Activated naive CD4-positive, alpha-beta T cell treated with anti-CD3 and anti-CD28 coated beads for 36 hours (primary cell): ENCODE measurements at regions of chr2 and their contacts with region 1.

Region 1: DNA sequence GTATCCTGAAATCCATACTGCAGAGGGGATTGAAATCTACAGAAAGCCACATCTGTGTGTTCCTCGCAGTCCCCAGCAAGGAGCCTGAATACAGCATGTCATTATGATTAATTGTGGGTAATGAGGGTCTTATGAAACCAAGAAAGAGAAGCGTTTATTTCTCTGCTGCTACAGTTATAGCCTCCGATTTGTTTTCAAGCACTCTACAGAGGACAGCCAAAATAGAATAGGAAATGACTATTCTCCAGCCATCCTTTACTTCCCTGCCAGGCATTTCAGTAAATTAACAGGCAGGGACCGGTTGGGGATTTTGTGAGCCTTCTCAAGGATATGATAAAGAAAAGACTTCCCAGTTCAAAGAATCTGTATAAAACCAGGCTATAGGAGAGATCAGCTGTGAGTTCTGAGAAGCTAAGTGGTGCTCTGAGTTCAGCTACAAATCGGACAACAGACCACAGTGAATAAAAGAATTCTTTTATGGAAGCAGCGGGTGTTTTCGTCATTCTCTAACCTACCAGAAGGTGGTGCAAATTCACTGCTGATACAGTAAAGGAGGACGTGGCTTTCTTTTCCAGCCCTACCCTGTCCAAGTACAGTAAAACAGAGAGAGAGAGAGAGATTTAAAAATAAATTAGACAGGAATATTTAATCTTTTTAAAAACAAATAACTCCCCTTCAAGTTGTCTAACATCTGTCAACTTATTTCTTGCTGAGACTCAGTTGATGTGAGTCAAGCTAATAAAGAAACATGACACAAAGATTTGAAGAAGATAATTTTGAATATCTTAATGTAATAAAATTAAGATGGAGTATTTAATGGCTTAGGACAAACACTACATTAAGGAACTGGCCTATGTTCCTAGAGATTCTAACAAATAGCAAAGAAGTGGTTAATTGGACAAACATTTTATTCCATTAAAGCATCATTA is 133.7 kb downstream of the INSIG2 start:
- DNase-seq: peak; percentile 56
- H3K4me3 Mint-ChIP-seq: no peak overlapping the region
- H3K27ac Mint-ChIP-seq: no peak overlapping the region
- H3K4me1 Mint-ChIP-seq: peaks cover 12% of the 10 kb centered on the region
- H3K27me3 Mint-ChIP-seq: peaks cover 57% of the 10 kb centered on the region

Region 2: DNA sequence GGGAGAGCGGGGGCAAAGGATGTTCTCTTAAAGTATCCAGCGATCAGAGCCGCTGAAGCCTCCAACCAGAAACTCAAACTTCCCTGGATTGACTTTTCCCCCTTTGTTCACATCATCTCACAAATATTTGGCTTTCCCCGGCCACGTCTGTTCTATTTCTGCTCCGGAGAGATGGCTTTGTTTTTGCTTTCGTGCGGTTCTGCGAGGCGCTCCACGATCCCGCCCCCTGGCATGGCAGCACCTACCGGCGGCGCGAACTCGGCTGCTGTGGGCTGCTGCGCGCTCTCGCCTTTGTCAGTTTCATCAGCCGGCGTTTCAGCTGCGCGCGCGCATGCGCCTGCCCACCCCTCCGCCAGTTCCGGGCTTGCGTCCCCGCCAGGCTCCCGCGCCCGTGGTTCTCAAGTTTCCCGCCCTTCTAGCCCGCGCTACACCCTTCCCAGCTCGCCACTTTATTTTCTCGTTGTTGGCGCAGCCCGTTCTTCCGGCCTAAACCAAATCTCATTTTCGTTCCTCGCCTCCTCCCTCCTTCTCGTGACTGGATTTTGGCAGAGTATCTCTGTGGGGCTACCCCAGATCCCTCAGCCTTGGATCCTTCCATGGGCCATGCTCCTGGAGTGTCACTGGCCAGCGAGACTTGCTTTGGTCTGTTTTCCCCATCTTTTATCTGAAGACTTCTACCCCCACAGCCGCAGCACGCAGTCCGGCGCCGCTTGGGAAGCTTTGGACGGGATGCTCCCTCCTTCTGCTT is 35.6 kb before region 1 on chr2:
- CTCF ChIA-PET with region 1: no interaction called
- intact Hi-C with region 1: loop called (anchors 1 kb)
- DNase-seq: peak; percentile 90
- H3K4me3 Mint-ChIP-seq: peak overlapping the region; percentile 92
- H3K27ac Mint-ChIP-seq: peak overlapping the region; percentile 97
- H3K4me1 Mint-ChIP-seq: peaks cover 14% of the 10 kb centered on the region
- H3K27me3 Mint-ChIP-seq: no peaks in the 10 kb centered on the region

Region 3: GRCh38 chr2:118309946-118310680 is 88.2 kb after region 1 on chr2:
- CTCF ChIA-PET with region 1: no interaction called
- intact Hi-C with region 1: loop called (anchors 1 kb)
- DNase-seq: peak; percentile 69
- H3K4me3 Mint-ChIP-seq: peak overlapping the region; percentile 79
- H3K27ac Mint-ChIP-seq: peak overlapping the region; percentile 90
- H3K4me1 Mint-ChIP-seq: peaks cover 2% of the 10 kb centered on the region
- H3K27me3 Mint-ChIP-seq: no peaks in the 10 kb centered on the region

Region 4: GRCh38 chr2:118371515-118371914 is 149.6 kb after region 1 on chr2:
- CTCF ChIA-PET with region 1: no interaction called
- intact Hi-C with region 1: loop called (anchors 5 kb)
- DNase-seq: peak; percentile 10
- H3K4me3 Mint-ChIP-seq: no peak overlapping the region
- H3K27ac Mint-ChIP-seq: no peak overlapping the region
- H3K4me1 Mint-ChIP-seq: no peaks in the 10 kb centered on the region
- H3K27me3 Mint-ChIP-seq: peaks cover 25% of the 10 kb centered on the region

Region 5: GRCh38 chr2:118865106-118865505 is 643.2 kb after region 1 on chr2:
- CTCF ChIA-PET with region 1: interaction called, 4 read pairs
- intact Hi-C with region 1: loop called (anchors 2 kb)
- DNase-seq: peak; percentile 32
- H3K4me3 Mint-ChIP-seq: no peak overlapping the region
- H3K27ac Mint-ChIP-seq: no peak overlapping the region
- H3K4me1 Mint-ChIP-seq: no peaks in the 10 kb centered on the region
- H3K27me3 Mint-ChIP-seq: peaks cover 40% of the 10 kb centered on the region

Region 6: GRCh38 chr2:119174216-119175037 is 952.5 kb after region 1 on chr2:
- CTCF ChIA-PET with region 1: no interaction called
- intact Hi-C with region 1: loop called (anchors 1 kb)
- DNase-seq: peak; percentile 57
- H3K4me3 Mint-ChIP-seq: no peak overlapping the region
- H3K27ac Mint-ChIP-seq: no peak overlapping the region
- H3K4me1 Mint-ChIP-seq: no peaks in the 10 kb centered on the region
- H3K27me3 Mint-ChIP-seq: no peaks in the 10 kb centered on the region